CD8-positive, alpha-beta memory T cell (primary cell): ENCODE measurements at regions of chr5 and their contacts with region 1.

Region 1: DNA sequence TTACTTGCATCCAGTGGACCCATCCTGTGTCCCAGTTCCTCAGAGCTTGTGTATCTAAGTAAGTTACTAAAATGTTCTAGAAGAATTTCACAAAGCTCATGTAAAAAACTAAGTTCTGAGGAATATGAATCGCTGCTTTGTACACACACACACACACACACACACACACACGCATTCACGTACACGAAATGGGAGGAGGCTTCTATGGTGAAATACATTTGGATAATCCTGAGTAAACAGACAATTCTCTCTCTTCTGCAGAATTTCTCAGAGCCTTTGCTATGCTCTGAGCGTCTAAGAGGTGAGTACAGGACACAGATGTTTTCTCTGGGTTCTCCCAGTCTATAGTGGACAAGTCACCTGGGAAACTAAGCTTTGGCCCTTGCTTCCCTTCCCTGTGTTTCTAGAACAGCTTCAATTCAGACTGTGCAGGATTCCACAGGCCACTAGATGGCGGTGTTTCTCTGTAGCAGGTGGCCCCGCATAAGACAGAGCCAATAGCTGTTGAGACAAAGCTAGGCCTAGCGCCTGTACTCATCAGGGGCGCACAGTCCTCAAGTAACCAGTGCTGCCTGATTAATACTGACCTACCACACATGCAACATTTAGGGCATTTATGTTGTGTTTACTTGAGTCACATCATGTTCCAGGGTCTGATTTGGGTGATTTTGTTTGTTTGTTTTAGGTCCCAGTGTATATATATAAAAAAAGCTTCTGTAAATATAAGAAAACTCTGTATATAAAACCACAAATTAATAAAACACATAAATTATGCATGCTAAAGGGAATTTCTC is 114.8 kb downstream of the LIFR start:
- DNase-seq: peak; percentile 62 to 82 (median 66)
- H3K4me3 ChIP-seq: no peak overlapping the region
- H3K4me3 Mint-ChIP-seq: no peak overlapping the region
- H3K27ac ChIP-seq: no peak overlapping the region
- H3K27ac Mint-ChIP-seq: no peak overlapping the region
- H3K4me1 ChIP-seq: no peaks in the 10 kb centered on the region
- H3K4me1 Mint-ChIP-seq: peaks cover 0 to 3% (median 2%) of the 10 kb centered on the region in 3 donors
- H3K27me3 ChIP-seq: no peaks in the 10 kb centered on the region
- H3K27me3 Mint-ChIP-seq: peaks cover 7 to 42% of the 10 kb centered on the region in 2 donors

Region 2: GRCh38 chr5:38329132-38329715 is 112.4 kb before region 1 on chr5:
- CTCF ChIA-PET with region 1: no interaction called
- POLR2A ChIA-PET with region 1: no interaction called
- DNase-seq: no peak
- H3K4me3 ChIP-seq: no peak overlapping the region
- H3K4me3 Mint-ChIP-seq: no peak overlapping the region
- H3K27ac ChIP-seq: no peak overlapping the region
- H3K27ac Mint-ChIP-seq: peak overlapping the region in 1 of 8 donors; percentile 62
- H3K4me1 ChIP-seq: no peaks in the 10 kb centered on the region
- H3K4me1 Mint-ChIP-seq: no peaks in the 10 kb centered on the region
- H3K27me3 ChIP-seq: no peaks in the 10 kb centered on the region
- H3K27me3 Mint-ChIP-seq: peaks cover 0 to 3% of the 10 kb centered on the region in 2 donors

Region 3: GRCh38 chr5:38420691-38421390 is 20.8 kb before region 1 on chr5:
- CTCF ChIA-PET with region 1: interaction called, 13 read pairs
- POLR2A ChIA-PET with region 1: no interaction called
- DNase-seq: no peak
- H3K4me3 ChIP-seq: no peak overlapping the region
- H3K4me3 Mint-ChIP-seq: no peak overlapping the region
- H3K27ac ChIP-seq: no peak overlapping the region
- H3K27ac Mint-ChIP-seq: peak overlapping the region in 1 of 8 donors; percentile 0
- H3K4me1 ChIP-seq: no peaks in the 10 kb centered on the region
- H3K4me1 Mint-ChIP-seq: no peaks in the 10 kb centered on the region
- H3K27me3 ChIP-seq: no peaks in the 10 kb centered on the region
- H3K27me3 Mint-ChIP-seq: peaks cover 10 to 36% of the 10 kb centered on the region in 2 donors

Region 4: GRCh38 chr5:38453506-38453905 is 11.9 kb after region 1 on chr5:
- CTCF ChIA-PET with region 1: interaction called, 49 read pairs
- POLR2A ChIA-PET with region 1: interaction called, 4 read pairs
- DNase-seq: peak; percentile 9 to 81 (median 63)
- H3K4me3 ChIP-seq: peak overlapping the region; percentile 1
- H3K4me3 Mint-ChIP-seq: peak overlapping the region; percentile 23 to 73 (median 58)
- H3K27ac ChIP-seq: no peak overlapping the region
- H3K27ac Mint-ChIP-seq: peak overlapping the region in 5 of 8 donors; percentile 13 to 62 (median 41)
- H3K4me1 ChIP-seq: peaks cover 35% of the 10 kb centered on the region
- H3K4me1 Mint-ChIP-seq: peaks cover 46 to 48% (median 47%) of the 10 kb centered on the region in 3 donors
- H3K27me3 ChIP-seq: peaks cover 37% of the 10 kb centered on the region
- H3K27me3 Mint-ChIP-seq: peaks cover 34 to 82% of the 10 kb centered on the region in 2 donors

Region 5: DNA sequence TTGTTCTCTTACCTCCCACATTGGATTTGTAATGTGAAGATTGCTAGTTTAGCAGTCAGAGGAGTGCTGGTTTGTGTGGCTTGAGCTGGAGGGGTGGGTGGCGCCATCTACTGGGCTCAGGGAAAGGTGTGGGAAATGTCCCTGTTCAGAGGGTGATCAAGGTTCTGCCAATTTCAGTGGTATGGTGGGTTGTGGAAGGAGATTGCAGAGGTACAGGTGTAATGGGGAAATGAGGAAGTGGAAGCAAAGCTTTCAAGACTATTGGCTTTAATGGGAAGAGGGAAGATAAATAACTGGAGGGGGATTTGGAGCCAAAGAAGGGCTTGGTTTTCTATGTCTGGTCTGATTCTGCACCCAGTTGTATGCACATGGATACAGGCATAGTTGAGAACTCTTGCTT is 480.5 kb after region 1 on chr5:
- CTCF ChIA-PET with region 1: interaction called, 25 read pairs
- POLR2A ChIA-PET with region 1: no interaction called
- DNase-seq: peak; percentile 5 to 54 (median 19)
- H3K4me3 ChIP-seq: no peak overlapping the region
- H3K4me3 Mint-ChIP-seq: no peak overlapping the region
- H3K27ac ChIP-seq: no peak overlapping the region
- H3K27ac Mint-ChIP-seq: no peak overlapping the region
- H3K4me1 ChIP-seq: no peaks in the 10 kb centered on the region
- H3K4me1 Mint-ChIP-seq: no peaks in the 10 kb centered on the region
- H3K27me3 ChIP-seq: no peaks in the 10 kb centered on the region
- H3K27me3 Mint-ChIP-seq: peaks cover 21 to 51% of the 10 kb centered on the region in 2 donors

Region 6: GRCh38 chr5:39547553-39548154 is 1106.0 kb after region 1 on chr5:
- CTCF ChIA-PET with region 1: interaction called, 12 read pairs
- POLR2A ChIA-PET with region 1: no interaction called
- DNase-seq: peak in 2 of 5 donors; percentile 19 to 23
- H3K4me3 ChIP-seq: no peak overlapping the region
- H3K4me3 Mint-ChIP-seq: peak overlapping the region in 4 of 7 donors; percentile 30 to 44 (median 41)
- H3K27ac ChIP-seq: no peak overlapping the region
- H3K27ac Mint-ChIP-seq: peak overlapping the region in 1 of 8 donors; percentile 51
- H3K4me1 ChIP-seq: no peaks in the 10 kb centered on the region
- H3K4me1 Mint-ChIP-seq: peaks cover 4 to 8% (median 4%) of the 10 kb centered on the region in 3 donors
- H3K27me3 ChIP-seq: no peaks in the 10 kb centered on the region
- H3K27me3 Mint-ChIP-seq: peaks cover 0 to 20% of the 10 kb centered on the region in 2 donors